ENCODE measurements at regions of chr3 and their contacts with region 1.

Region 1: DNA sequence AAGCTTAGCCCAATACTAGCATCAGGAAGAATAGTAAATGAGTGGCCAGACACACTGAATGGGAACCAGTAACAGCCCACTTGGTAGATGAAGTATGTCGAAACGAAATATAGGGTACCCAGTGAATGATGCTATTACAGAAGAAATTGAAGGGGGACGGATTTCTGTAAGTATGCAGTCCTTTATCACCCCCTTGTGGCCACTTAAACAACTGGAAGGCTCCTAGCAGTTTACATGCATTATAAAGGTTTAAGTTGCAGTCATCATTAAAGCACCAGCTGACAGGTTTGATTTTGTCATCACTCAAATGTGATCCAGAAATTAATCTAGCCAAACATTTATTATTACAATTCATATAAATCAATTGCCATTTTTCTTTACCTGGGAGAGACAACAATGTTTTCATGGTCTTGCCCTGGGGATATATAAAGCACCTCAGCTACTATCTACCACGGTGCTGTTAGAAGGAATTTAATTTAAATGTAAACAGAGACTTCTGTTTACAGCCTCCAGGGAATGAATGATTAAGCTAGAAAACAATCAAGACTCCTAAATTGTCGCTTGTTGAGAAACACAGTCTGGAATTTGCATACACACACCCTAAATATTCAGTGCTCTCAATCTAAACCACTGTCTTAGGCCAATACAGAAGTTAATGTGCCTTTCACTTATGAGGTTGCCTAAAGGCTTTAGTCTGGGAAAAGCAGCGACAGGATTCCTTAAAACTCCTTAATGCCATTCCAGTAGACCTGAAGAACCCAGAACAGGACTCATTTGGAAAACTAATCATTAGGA is 7.8 kb downstream of the EIF1B start:
- DNase-seq: peak; percentile 60
- ATAC-seq: peak; percentile 64
- H3K4me3 ChIP-seq: no peak overlapping the region
- H3K27ac ChIP-seq: no peak overlapping the region
- H3K4me1 ChIP-seq: peaks cover 23% of the 10 kb centered on the region
- H3K27me3 ChIP-seq: no peaks in the 10 kb centered on the region
- CTCF ChIP-seq: peak; percentile 79
- EP300 ChIP-seq: no peak
- POLR2A ChIP-seq: no peak
- RAD21 ChIP-seq: peak; percentile 76

Region 2: DNA sequence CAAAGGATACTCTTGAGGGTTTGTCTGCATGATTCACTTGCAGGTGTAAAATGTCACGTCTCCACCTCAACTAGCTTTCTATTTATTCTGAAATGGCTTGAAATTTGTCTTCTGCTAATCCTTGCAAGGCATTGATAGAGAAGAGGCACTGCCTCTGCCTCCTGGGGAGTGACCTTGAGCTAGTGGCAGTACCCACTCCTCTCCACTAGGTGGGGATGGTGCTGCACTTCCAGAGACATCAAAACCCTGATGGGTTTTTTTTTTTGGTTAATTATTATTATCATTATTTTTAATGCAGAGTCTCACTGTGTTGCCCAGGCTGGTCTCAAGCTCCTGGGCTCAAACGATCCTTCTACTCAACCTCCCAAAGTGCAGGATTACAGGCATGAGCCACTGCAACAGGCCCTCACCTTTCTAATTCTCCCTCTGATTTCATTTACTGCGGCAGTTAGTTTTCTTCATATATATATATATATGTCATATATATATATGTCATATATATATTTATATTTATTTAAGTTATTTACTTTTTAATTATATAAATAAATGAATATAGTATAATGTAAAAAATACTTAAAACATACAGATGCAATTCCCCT is 125.3 kb before region 1 on chr3:
- CTCF ChIA-PET with region 1: interaction called, 30 read pairs
- POLR2A ChIA-PET with region 1: interaction called, 3 read pairs
- in situ Hi-C with region 1: loop called (anchors 5 kb)
- intact Hi-C with region 1: loop called (anchors 1 kb)
- DNase-seq: peak; percentile 33
- ATAC-seq: peak; percentile 79
- H3K4me3 ChIP-seq: no peak overlapping the region
- H3K27ac ChIP-seq: no peak overlapping the region
- H3K4me1 ChIP-seq: no peaks in the 10 kb centered on the region
- H3K27me3 ChIP-seq: no peaks in the 10 kb centered on the region
- CTCF ChIP-seq: peak; percentile 75
- EP300 ChIP-seq: no peak
- POLR2A ChIP-seq: no peak
- RAD21 ChIP-seq: peak; percentile 39

Region 3: DNA sequence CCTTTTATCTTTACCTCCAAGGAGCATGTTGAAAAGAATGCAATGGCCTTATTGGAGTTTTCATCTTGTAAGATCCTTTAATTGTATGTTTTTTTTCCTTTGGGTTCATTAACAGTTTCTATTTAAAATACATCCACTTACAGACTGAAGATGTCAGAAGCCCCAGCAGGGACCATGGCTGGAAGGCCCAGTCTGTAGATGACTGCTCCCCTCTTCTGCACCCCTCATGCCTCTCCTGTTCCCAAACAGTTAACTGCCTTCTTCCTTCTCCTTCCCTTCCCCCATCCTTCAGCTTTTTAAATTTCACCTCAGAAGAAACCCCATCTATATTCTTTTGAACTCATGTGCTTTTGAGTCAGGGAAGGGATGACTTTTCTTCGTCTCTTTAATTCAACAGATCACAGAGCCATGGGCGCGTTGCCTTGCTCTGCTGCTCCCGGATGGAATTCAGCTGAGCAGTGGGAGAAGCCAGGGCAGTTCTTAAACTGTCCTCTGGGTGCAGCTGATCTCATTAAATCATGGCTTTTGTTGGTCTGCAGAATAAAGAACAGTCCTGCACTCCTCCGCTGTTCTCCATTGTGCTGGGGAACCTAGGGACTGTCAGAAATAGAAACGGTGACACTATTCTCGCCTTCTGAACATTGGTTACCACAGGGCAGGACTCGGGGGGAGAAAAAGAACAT is 79.2 kb before region 1 on chr3:
- CTCF ChIA-PET with region 1: no interaction called
- POLR2A ChIA-PET with region 1: no interaction called
- in situ Hi-C with region 1: no loop called
- intact Hi-C with region 1: no loop called
- DNase-seq: no peak
- ATAC-seq: peak; percentile 89
- H3K4me3 ChIP-seq: no peak overlapping the region
- H3K27ac ChIP-seq: no peak overlapping the region
- H3K4me1 ChIP-seq: no peaks in the 10 kb centered on the region
- H3K27me3 ChIP-seq: no peaks in the 10 kb centered on the region
- CTCF ChIP-seq: no peak
- EP300 ChIP-seq: no peak
- POLR2A ChIP-seq: no peak
- RAD21 ChIP-seq: no peak

Region 4: GRCh38 chr3:41872157-41872556 is 1554.9 kb after region 1 on chr3:
- CTCF ChIA-PET with region 1: no interaction called
- POLR2A ChIA-PET with region 1: no interaction called
- in situ Hi-C with region 1: loop called (anchors 10 kb)
- intact Hi-C with region 1: no loop called
- DNase-seq: no peak
- ATAC-seq: no peak
- H3K4me3 ChIP-seq: no peak overlapping the region
- H3K27ac ChIP-seq: no peak overlapping the region
- H3K4me1 ChIP-seq: no peaks in the 10 kb centered on the region
- H3K27me3 ChIP-seq: no peaks in the 10 kb centered on the region
- CTCF ChIP-seq: no peak
- EP300 ChIP-seq: no peak
- POLR2A ChIP-seq: no peak
- RAD21 ChIP-seq: no peak